ENCODE measurements at regions of chr12 and their contacts with region 1.

Region 1: DNA sequence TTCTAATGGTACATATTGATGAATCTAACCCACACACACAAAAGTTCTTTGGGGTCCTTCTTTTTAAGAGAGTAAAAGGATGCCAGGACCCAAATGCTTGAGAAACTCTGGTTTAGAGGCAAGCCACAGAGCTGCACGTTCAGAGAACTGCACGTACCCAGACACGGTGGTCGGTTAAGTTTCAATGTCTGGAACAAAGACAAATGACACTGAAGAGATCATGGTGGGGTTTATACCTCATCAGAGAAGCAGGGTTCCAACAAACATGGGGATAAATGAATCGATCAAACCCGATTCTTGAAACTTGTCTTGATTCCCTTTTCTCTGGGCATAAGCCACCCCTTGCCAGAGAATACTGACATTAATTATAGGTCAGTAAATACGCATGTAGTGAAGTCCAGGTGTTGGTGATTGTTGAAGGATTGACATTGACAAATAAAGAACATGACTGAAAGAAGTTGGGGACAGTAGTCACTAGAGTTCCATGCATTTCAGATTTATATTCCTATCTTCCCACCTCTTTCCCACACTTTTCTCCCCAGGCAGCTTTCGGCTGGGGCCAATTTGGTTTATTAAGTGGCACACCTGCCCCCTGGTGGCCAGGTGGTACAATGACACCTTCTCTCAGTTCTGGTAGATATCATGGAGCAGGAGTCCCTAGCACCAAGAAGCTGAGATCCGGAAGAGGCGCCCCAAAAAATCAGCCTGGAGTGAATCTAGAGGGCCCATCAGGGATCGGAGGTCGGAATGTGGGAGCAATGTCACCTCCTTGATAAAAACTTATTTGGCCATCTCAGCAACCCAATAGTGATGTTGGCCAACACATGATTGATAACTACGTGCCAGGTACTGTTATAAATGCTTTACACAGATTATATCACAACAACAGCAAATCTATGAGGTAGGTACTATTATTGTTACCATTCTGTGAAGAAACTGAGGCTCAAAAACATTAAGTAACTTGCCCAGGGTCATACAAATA is 17.8 kb upstream of the HDAC7 start:
- DNase-seq: peak; percentile 50 to 73 (median 64)
- H3K4me3 ChIP-seq: no peak overlapping the region
- H3K4me3 Mint-ChIP-seq: no peak overlapping the region
- H3K27ac ChIP-seq: no peak overlapping the region
- H3K27ac Mint-ChIP-seq: peak overlapping the region in 6 of 7 donors; percentile 10 to 93 (median 40)
- H3K4me1 ChIP-seq: peaks cover 47% of the 10 kb centered on the region
- H3K4me1 Mint-ChIP-seq: peaks cover 31 to 53% (median 42%) of the 10 kb centered on the region in 4 donors
- H3K27me3 ChIP-seq: no peaks in the 10 kb centered on the region
- H3K27me3 Mint-ChIP-seq: no peaks in the 10 kb centered on the region

Region 2: DNA sequence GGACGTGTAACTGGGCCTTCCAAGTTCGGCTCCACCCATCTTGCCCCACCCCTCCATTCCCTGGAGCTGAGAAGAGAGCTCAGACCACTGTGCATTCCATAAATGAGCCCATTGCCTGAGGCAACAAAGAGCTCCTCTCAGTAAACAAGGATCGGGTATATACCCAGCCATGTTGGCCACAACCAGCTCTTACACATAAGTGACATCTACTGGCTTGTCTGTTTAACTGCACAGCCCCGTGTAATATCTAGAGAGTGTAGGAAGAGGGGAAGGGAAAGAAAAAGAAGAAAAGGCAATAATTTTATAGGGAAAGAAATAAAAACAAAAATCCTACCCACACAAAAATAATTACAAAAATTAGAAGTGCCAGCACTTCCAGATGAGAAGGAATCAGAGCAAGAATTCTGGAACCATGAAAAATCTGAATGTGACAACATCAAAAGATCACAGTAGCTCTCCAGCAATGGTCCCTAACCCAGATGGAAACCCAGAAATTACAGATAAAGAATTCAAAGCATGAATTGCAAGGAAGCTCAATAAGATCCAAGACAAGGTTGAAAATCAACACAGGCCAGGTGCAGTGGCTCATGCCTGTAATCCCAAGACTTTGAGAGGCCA is 439.7 kb before region 1 on chr12:
- CTCF ChIA-PET with region 1: no interaction called
- POLR2A ChIA-PET with region 1: no interaction called
- intact Hi-C with region 1: no loop called
- DNase-seq: peak; percentile 60 to 66 (median 65)
- H3K4me3 ChIP-seq: peak overlapping the region in 1 of 2 donors; percentile 14
- H3K4me3 Mint-ChIP-seq: peak overlapping the region in 7 of 8 donors; percentile 58 to 79 (median 69)
- H3K27ac ChIP-seq: peak overlapping the region; percentile 35
- H3K27ac Mint-ChIP-seq: peak overlapping the region; percentile 75 to 94 (median 90)
- H3K4me1 ChIP-seq: peaks cover 52% of the 10 kb centered on the region
- H3K4me1 Mint-ChIP-seq: peaks cover 39 to 50% (median 44%) of the 10 kb centered on the region in 4 donors
- H3K27me3 ChIP-seq: no peaks in the 10 kb centered on the region
- H3K27me3 Mint-ChIP-seq: no peaks in the 10 kb centered on the region

Region 3: GRCh38 chr12:47591361-47591791 is 246.1 kb before region 1 on chr12:
- CTCF ChIA-PET with region 1: no interaction called
- POLR2A ChIA-PET with region 1: no interaction called
- intact Hi-C with region 1: no loop called
- DNase-seq: no peak
- H3K4me3 ChIP-seq: no peak overlapping the region
- H3K4me3 Mint-ChIP-seq: no peak overlapping the region
- H3K27ac ChIP-seq: no peak overlapping the region
- H3K27ac Mint-ChIP-seq: peak overlapping the region in 1 of 7 donors; percentile 24
- H3K4me1 ChIP-seq: no peaks in the 10 kb centered on the region
- H3K4me1 Mint-ChIP-seq: peaks cover 0 to 8% (median under 1%) of the 10 kb centered on the region in 4 donors
- H3K27me3 ChIP-seq: no peaks in the 10 kb centered on the region
- H3K27me3 Mint-ChIP-seq: peaks cover 0 to 2% of the 10 kb centered on the region in 2 donors

Region 4: GRCh38 chr12:47651368-47652254 is 185.9 kb before region 1 on chr12:
- CTCF ChIA-PET with region 1: interaction called, 3 read pairs
- POLR2A ChIA-PET with region 1: no interaction called
- intact Hi-C with region 1: loop called (anchors 5 kb)
- DNase-seq: peak; percentile 55 to 64 (median 60)
- H3K4me3 ChIP-seq: no peak overlapping the region
- H3K4me3 Mint-ChIP-seq: peak overlapping the region; percentile 37 to 77 (median 74)
- H3K27ac ChIP-seq: no peak overlapping the region
- H3K27ac Mint-ChIP-seq: peak overlapping the region in 6 of 7 donors; percentile 38 to 72 (median 70)
- H3K4me1 ChIP-seq: peaks cover 5% of the 10 kb centered on the region
- H3K4me1 Mint-ChIP-seq: peaks cover 5 to 10% (median 8%) of the 10 kb centered on the region in 4 donors
- H3K27me3 ChIP-seq: no peaks in the 10 kb centered on the region
- H3K27me3 Mint-ChIP-seq: no peaks in the 10 kb centered on the region

Region 5: DNA sequence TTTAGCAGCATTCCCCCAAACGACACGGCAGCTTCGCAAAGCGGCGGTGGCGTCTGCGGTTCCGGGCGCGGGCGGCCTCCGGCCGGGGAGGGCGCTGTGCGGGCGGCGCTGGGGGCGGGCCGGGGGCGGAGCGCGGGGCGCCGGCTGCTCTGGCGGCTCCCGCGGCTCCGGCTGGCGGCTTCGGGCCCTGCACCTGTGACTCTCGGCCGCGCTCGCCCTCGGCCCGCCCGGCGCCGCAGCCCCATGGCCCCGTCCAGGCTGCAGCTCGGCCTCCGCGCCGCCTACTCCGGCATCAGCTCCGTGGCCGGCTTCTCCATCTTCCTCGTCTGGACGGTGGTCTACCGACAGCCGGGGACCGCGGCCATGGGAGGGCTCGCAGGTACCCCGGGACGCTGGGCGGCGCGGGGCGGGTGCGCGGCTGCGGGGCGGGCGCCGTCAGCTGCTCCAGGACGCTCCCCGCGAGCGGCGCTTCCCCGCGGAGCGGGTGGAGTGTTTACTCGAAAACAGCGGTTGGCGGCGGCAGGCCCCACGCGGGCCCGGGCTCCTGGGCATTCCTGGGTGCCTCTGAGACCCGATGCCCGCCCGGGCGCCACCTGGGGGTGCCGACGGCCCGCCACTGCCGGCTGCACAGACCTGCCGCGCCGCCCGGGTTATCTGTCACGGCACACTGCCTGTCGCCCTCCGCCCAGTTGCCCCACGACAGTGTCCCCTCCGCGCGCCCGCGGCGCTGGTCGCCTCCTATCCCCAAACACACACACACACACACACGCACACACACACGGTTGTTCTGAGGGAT is 64.2 kb before region 1 on chr12 and contains the start of gene SLC48A1:
- CTCF ChIA-PET with region 1: interaction called, 484 read pairs
- POLR2A ChIA-PET with region 1: interaction called, 41 read pairs
- intact Hi-C with region 1: loop called (anchors 1 kb)
- DNase-seq: peak; percentile 63 to 83 (median 76)
- H3K4me3 ChIP-seq: peak within 1 kb of the TSS in 1 of 2 donors; percentile 62
- H3K4me3 Mint-ChIP-seq: peak within 1 kb of the TSS; percentile 84 to 94 (median 89)
- H3K27ac ChIP-seq: peak within 1 kb of the TSS; percentile 47
- H3K27ac Mint-ChIP-seq: peak within 1 kb of the TSS; percentile 77 to 91 (median 84)
- H3K4me1 ChIP-seq: peaks cover 16% of the 10 kb centered on the region
- H3K4me1 Mint-ChIP-seq: peaks cover 5 to 23% (median 14%) of the 10 kb centered on the region in 4 donors
- H3K27me3 ChIP-seq: no peaks in the 10 kb centered on the region
- H3K27me3 Mint-ChIP-seq: no peaks in the 10 kb centered on the region
- total RNA-seq, gene SLC48A1: 12.1 to 12.3 TPM

Region 6: GRCh38 chr12:47785036-47785886 is 52.2 kb before region 1 on chr12:
- CTCF ChIA-PET with region 1: interaction called, 484 read pairs
- POLR2A ChIA-PET with region 1: interaction called, 41 read pairs
- intact Hi-C with region 1: no loop called
- DNase-seq: no peak
- H3K4me3 ChIP-seq: no peak overlapping the region
- H3K4me3 Mint-ChIP-seq: no peak overlapping the region
- H3K27ac ChIP-seq: no peak overlapping the region
- H3K27ac Mint-ChIP-seq: peak overlapping the region in 5 of 7 donors; percentile 24 to 72 (median 62)
- H3K4me1 ChIP-seq: no peaks in the 10 kb centered on the region
- H3K4me1 Mint-ChIP-seq: peaks cover 4 to 7% (median 5%) of the 10 kb centered on the region in 4 donors
- H3K27me3 ChIP-seq: no peaks in the 10 kb centered on the region
- H3K27me3 Mint-ChIP-seq: no peaks in the 10 kb centered on the region

Region 7: DNA sequence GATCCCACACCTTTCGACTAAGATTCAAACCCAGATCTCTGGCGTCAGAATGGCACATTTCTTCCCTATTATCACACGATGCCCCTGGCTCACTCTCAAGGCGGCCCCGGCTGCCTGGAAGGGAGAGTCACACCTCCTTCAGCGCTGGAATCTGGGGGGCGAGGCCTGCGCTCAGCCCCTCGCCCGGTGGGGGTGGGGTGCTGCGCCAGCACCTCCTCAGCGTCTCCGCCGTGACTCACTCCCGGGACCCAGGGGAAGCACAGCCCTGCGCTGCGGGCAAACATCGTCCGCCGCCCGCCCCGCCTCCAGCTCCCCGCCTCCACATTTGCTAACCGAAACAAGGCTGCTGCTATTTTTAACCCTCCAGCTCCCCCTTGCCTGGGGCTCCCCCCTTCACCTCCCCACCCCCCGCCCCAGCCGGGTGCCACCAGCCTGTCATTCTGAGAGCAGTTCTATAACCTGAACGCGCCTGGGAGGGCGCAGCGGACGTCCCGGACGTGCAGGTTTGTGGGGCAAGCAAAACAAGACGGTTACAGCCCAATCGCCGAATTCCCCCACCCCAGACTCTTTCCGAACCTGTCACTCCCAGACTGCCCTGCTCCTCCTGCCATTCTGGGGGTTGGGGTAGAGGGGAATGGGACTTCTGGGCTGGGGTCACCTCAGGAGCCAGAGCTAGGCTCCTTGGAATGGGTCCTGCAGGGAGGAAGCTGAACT is 24.5 kb before region 1 on chr12:
- CTCF ChIA-PET with region 1: interaction called, 568 read pairs
- POLR2A ChIA-PET with region 1: interaction called, 516 read pairs
- intact Hi-C with region 1: loop called (anchors 1 kb)
- DNase-seq: peak; percentile 79 to 97 (median 85)
- H3K4me3 ChIP-seq: peak overlapping the region; percentile 57 to 80
- H3K4me3 Mint-ChIP-seq: peak overlapping the region; percentile 82 to 92 (median 86)
- H3K27ac ChIP-seq: peak overlapping the region; percentile 91
- H3K27ac Mint-ChIP-seq: peak overlapping the region; percentile 93 to 99 (median 97)
- H3K4me1 ChIP-seq: peaks cover 97% of the 10 kb centered on the region
- H3K4me1 Mint-ChIP-seq: peaks cover 73 to 100% (median 88%) of the 10 kb centered on the region in 4 donors
- H3K27me3 ChIP-seq: no peaks in the 10 kb centered on the region
- H3K27me3 Mint-ChIP-seq: no peaks in the 10 kb centered on the region